CD8-positive, alpha-beta T cell (primary cell): ENCODE measurements at regions of chr19 and their contacts with region 1.

Region 1: GRCh38 chr19:21028969-21029268 is 8.5 kb downstream of the ZNF430 start:
- DNase-seq: no peak
- ATAC-seq: no peak
- H3K4me3 ChIP-seq: no peak overlapping the region
- H3K4me3 Mint-ChIP-seq: no peak overlapping the region
- H3K27ac ChIP-seq: no peak overlapping the region
- H3K27ac Mint-ChIP-seq: peak overlapping the region; percentile 60
- H3K4me1 ChIP-seq: peaks cover 26% of the 10 kb centered on the region
- H3K4me1 Mint-ChIP-seq: peaks cover 70% of the 10 kb centered on the region
- H3K27me3 ChIP-seq: no peaks in the 10 kb centered on the region
- H3K27me3 Mint-ChIP-seq: no peaks in the 10 kb centered on the region
- CTCF ChIP-seq: no peak

Region 2: GRCh38 chr19:21046489-21046888 is 17.6 kb after region 1 on chr19:
- CTCF ChIA-PET with region 1: no interaction called
- POLR2A ChIA-PET with region 1: no interaction called
- intact Hi-C with region 1: loop called in 1 of 2 experiments (anchors 1 kb)
- DNase-seq: no peak
- ATAC-seq: no peak
- H3K4me3 ChIP-seq: no peak overlapping the region
- H3K4me3 Mint-ChIP-seq: no peak overlapping the region
- H3K27ac ChIP-seq: no peak overlapping the region
- H3K27ac Mint-ChIP-seq: no peak overlapping the region
- H3K4me1 ChIP-seq: no peaks in the 10 kb centered on the region
- H3K4me1 Mint-ChIP-seq: peaks cover 23% of the 10 kb centered on the region
- H3K27me3 ChIP-seq: no peaks in the 10 kb centered on the region
- H3K27me3 Mint-ChIP-seq: no peaks in the 10 kb centered on the region
- CTCF ChIP-seq: no peak